ENCODE measurements at regions of chr7 and their contacts with region 1.

Region 1: GRCh38 chr7:84578825-84579224 is 384.2 kb upstream of the SEMA3A start:
- DNase-seq: no peak
- ATAC-seq: no peak
- H3K4me3 Mint-ChIP-seq: no peak overlapping the region
- H3K27ac Mint-ChIP-seq: no peak overlapping the region
- H3K4me1 Mint-ChIP-seq: no peaks in the 10 kb centered on the region
- H3K27me3 Mint-ChIP-seq: no peaks in the 10 kb centered on the region

Region 2: GRCh38 chr7:83588602-83589240 is 990.1 kb before region 1 on chr7:
- CTCF ChIA-PET with region 1: no interaction called
- POLR2A ChIA-PET with region 1: no interaction called
- intact Hi-C with region 1: no loop called
- DNase-seq: no peak
- ATAC-seq: no peak
- H3K4me3 Mint-ChIP-seq: no peak overlapping the region
- H3K27ac Mint-ChIP-seq: no peak overlapping the region
- H3K4me1 Mint-ChIP-seq: no peaks in the 10 kb centered on the region
- H3K27me3 Mint-ChIP-seq: no peaks in the 10 kb centered on the region

Region 3: DNA sequence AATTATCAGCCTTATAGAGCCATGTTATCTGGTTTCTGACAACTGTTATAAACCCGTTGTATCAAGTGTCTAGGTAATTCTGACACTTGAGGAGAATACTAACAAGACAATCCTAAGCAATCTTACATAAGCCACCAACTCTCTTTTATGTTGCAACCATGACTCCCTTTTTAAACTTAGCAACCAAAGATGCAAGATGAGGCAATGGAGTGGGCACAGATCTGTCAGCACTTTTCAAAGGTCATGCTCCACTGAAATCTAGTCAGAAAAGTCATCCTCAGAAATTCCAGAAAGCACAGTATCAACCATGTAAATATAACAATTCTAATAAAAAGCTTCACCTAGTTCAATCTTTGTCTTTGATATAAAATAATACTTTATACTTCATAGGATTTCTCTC is 307.3 kb before region 1 on chr7:
- CTCF ChIA-PET with region 1: no interaction called
- POLR2A ChIA-PET with region 1: no interaction called
- intact Hi-C with region 1: no loop called
- DNase-seq: no peak
- ATAC-seq: no peak
- H3K4me3 Mint-ChIP-seq: no peak overlapping the region
- H3K27ac Mint-ChIP-seq: no peak overlapping the region
- H3K4me1 Mint-ChIP-seq: no peaks in the 10 kb centered on the region
- H3K27me3 Mint-ChIP-seq: no peaks in the 10 kb centered on the region

Region 4: GRCh38 chr7:84565345-84566074 is 13.3 kb before region 1 on chr7:
- CTCF ChIA-PET with region 1: no interaction called
- POLR2A ChIA-PET with region 1: no interaction called
- intact Hi-C with region 1: loop called in 1 of 2 experiments (anchors 1 kb)
- DNase-seq: no peak
- ATAC-seq: no peak
- H3K4me3 Mint-ChIP-seq: no peak overlapping the region
- H3K27ac Mint-ChIP-seq: no peak overlapping the region
- H3K4me1 Mint-ChIP-seq: no peaks in the 10 kb centered on the region
- H3K27me3 Mint-ChIP-seq: no peaks in the 10 kb centered on the region

Measured in activated CD4-positive, alpha-beta T cell treated with anti-CD3 and anti-CD28 coated beads for 36 hours (primary cell).